ENCODE measurements at regions of chr9 and their contacts with region 1.

Region 1: GRCh38 chr9:131046581-131047202 is 37.7 kb downstream of the LAMC3 start:
- DNase-seq: peak; percentile 83
- ATAC-seq: peak; percentile 84
- H3K4me3 ChIP-seq: no peak overlapping the region
- H3K4me3 Mint-ChIP-seq: peak overlapping the region; percentile 26
- H3K27ac ChIP-seq: no peak overlapping the region
- H3K27ac Mint-ChIP-seq: no peak overlapping the region
- H3K4me1 ChIP-seq: peaks cover 17 to 34% of the 10 kb centered on the region in 2 donors
- H3K4me1 Mint-ChIP-seq: peaks cover 16% of the 10 kb centered on the region
- H3K27me3 ChIP-seq: peaks cover 0 to 5% (median 0%) of the 10 kb centered on the region in 4 experiments
- H3K27me3 Mint-ChIP-seq: peaks cover 7% of the 10 kb centered on the region
- CTCF ChIP-seq: peak; percentile 99

Region 2: GRCh38 chr9:130701056-130702022 is 345.4 kb before region 1 on chr9:
- CTCF ChIA-PET with region 1: interaction called, 30 read pairs
- POLR2A ChIA-PET with region 1: no interaction called
- intact Hi-C with region 1: no loop called
- DNase-seq: peak; percentile 73
- ATAC-seq: peak; percentile 67
- H3K4me3 ChIP-seq: no peak overlapping the region
- H3K4me3 Mint-ChIP-seq: no peak overlapping the region
- H3K27ac ChIP-seq: no peak overlapping the region
- H3K27ac Mint-ChIP-seq: no peak overlapping the region
- H3K4me1 ChIP-seq: no peaks in the 10 kb centered on the region
- H3K4me1 Mint-ChIP-seq: peaks cover 15% of the 10 kb centered on the region
- H3K27me3 ChIP-seq: no peaks in the 10 kb centered on the region
- H3K27me3 Mint-ChIP-seq: no peaks in the 10 kb centered on the region
- CTCF ChIP-seq: peak; percentile 96

Region 3: DNA sequence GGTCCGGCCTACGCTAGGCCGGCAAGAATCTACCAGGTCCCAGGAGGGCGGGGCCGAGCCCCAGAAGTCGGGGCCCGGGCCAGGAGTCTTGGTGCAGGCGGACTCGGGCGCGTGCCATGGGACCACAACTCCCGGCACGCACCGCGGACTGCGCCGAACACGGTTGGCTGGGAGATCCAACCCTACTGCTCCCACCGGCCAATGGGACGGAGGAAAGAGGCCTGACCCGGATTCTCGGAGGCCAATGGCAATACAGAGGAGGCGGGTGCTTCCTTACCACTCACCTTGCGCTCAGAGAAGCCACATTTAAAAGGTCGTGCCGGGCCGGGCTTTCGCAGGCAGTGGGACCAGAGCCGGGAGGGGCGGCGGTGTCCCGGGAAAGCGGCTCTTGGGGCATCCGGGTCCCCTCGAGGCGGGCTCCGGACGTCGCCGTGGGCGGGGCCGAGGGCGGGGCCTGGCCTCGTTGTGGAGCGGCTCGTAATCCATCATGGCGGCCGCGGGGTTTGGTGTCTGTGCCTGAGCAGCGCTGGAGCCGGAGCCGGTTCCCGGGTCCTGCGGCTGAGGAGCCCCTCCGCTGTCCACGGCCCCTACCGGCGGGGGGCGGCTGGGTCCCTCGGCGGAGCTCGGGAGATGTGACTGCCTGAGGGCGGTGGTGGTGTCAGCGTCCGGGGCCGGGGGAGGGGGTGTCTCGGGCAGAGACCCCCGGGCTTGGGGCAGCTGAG is 334.0 kb before region 1 on chr9:
- CTCF ChIA-PET with region 1: interaction called, 30 read pairs
- POLR2A ChIA-PET with region 1: no interaction called
- intact Hi-C with region 1: loop called (anchors 1 kb)
- DNase-seq: peak; percentile 97
- ATAC-seq: peak; percentile 97
- H3K4me3 ChIP-seq: peak overlapping the region; percentile 53 to 94 (median 88)
- H3K4me3 Mint-ChIP-seq: peak overlapping the region; percentile 92
- H3K27ac ChIP-seq: peak overlapping the region; percentile 92 to 98
- H3K27ac Mint-ChIP-seq: peak overlapping the region; percentile 95
- H3K4me1 ChIP-seq: peaks cover 24 to 33% of the 10 kb centered on the region in 2 donors
- H3K4me1 Mint-ChIP-seq: peaks cover 33% of the 10 kb centered on the region
- H3K27me3 ChIP-seq: no peaks in the 10 kb centered on the region
- H3K27me3 Mint-ChIP-seq: no peaks in the 10 kb centered on the region
- CTCF ChIP-seq: no peak

Region 4: GRCh38 chr9:130780865-130781504 is 265.7 kb before region 1 on chr9:
- CTCF ChIA-PET with region 1: no interaction called
- POLR2A ChIA-PET with region 1: no interaction called
- intact Hi-C with region 1: no loop called
- DNase-seq: no peak
- ATAC-seq: no peak
- H3K4me3 ChIP-seq: no peak overlapping the region
- H3K4me3 Mint-ChIP-seq: no peak overlapping the region
- H3K27ac ChIP-seq: no peak overlapping the region
- H3K27ac Mint-ChIP-seq: no peak overlapping the region
- H3K4me1 ChIP-seq: no peaks in the 10 kb centered on the region
- H3K4me1 Mint-ChIP-seq: peaks cover 6% of the 10 kb centered on the region
- H3K27me3 ChIP-seq: no peaks in the 10 kb centered on the region
- H3K27me3 Mint-ChIP-seq: no peaks in the 10 kb centered on the region
- CTCF ChIP-seq: no peak

Region 5: GRCh38 chr9:130866474-130866965 is 180.2 kb before region 1 on chr9:
- CTCF ChIA-PET with region 1: interaction called, 142 read pairs
- POLR2A ChIA-PET with region 1: interaction called, 5 read pairs
- intact Hi-C with region 1: no loop called
- DNase-seq: peak; percentile 67
- ATAC-seq: peak; percentile 47
- H3K4me3 ChIP-seq: no peak overlapping the region
- H3K4me3 Mint-ChIP-seq: no peak overlapping the region
- H3K27ac ChIP-seq: no peak overlapping the region
- H3K27ac Mint-ChIP-seq: no peak overlapping the region
- H3K4me1 ChIP-seq: peaks cover 7 to 12% of the 10 kb centered on the region in 2 donors
- H3K4me1 Mint-ChIP-seq: peaks cover 15% of the 10 kb centered on the region
- H3K27me3 ChIP-seq: no peaks in the 10 kb centered on the region
- H3K27me3 Mint-ChIP-seq: no peaks in the 10 kb centered on the region
- CTCF ChIP-seq: peak; percentile 79

Region 6: DNA sequence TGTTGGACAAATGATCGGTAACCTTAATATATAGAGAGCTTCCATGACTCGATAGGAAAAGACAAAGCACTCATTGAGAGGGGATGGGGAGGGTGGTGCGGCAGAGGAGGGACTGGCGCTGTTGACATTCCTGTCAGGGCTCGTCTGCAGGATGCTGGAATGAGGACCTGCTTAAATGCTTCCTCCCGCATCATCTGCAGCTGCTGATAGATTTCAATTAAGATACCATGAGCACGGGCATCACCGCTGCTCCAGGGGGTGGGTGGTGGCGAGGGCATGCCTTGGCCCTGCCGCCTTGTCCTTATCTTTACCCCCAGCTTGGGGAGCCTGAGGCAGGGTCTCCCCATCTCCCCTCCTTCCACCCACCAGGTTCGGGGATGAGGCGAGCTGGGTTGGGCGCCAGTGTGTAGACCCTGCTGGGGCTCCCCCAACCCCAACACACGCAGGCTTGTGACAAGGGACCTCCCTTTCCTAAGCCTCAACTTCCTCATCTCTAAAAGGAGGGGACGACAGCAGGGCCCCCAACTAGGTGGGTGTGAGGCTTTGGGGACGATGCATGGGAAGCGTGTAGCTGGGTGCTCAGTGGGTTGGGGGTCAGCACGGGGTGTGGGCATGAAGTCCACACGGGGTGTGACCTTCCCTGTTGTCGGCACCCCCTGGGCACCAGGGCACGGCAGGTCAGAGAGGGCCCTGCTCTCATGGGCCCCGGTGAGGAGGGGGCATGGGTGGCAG is 138.4 kb before region 1 on chr9:
- CTCF ChIA-PET with region 1: no interaction called
- POLR2A ChIA-PET with region 1: no interaction called
- intact Hi-C with region 1: no loop called
- DNase-seq: no peak
- ATAC-seq: no peak
- H3K4me3 ChIP-seq: no peak overlapping the region
- H3K4me3 Mint-ChIP-seq: no peak overlapping the region
- H3K27ac ChIP-seq: no peak overlapping the region
- H3K27ac Mint-ChIP-seq: no peak overlapping the region
- H3K4me1 ChIP-seq: no peaks in the 10 kb centered on the region
- H3K4me1 Mint-ChIP-seq: no peaks in the 10 kb centered on the region
- H3K27me3 ChIP-seq: no peaks in the 10 kb centered on the region
- H3K27me3 Mint-ChIP-seq: peaks cover 5% of the 10 kb centered on the region
- CTCF ChIP-seq: no peak

Region 7: GRCh38 chr9:130940693-130941576 is 105.8 kb before region 1 on chr9:
- CTCF ChIA-PET with region 1: interaction called, 8 read pairs
- POLR2A ChIA-PET with region 1: no interaction called
- intact Hi-C with region 1: loop called (anchors 1 kb)
- DNase-seq: peak; percentile 76
- ATAC-seq: peak; percentile 84
- H3K4me3 ChIP-seq: peak overlapping the region in 1 of 5 experiments; percentile 19
- H3K4me3 Mint-ChIP-seq: peak overlapping the region; percentile 47
- H3K27ac ChIP-seq: no peak overlapping the region
- H3K27ac Mint-ChIP-seq: no peak overlapping the region
- H3K4me1 ChIP-seq: peaks cover 19 to 32% of the 10 kb centered on the region in 2 donors
- H3K4me1 Mint-ChIP-seq: peaks cover 21% of the 10 kb centered on the region
- H3K27me3 ChIP-seq: peaks cover 0 to 53% (median 27%) of the 10 kb centered on the region in 4 experiments
- H3K27me3 Mint-ChIP-seq: peaks cover 55% of the 10 kb centered on the region
- CTCF ChIP-seq: peak; percentile 89

Region 8: GRCh38 chr9:131031005-131031641 is 15.6 kb before region 1 on chr9:
- CTCF ChIA-PET with region 1: interaction called, 10 read pairs
- POLR2A ChIA-PET with region 1: no interaction called
- intact Hi-C with region 1: no loop called
- DNase-seq: no peak
- ATAC-seq: no peak
- H3K4me3 ChIP-seq: no peak overlapping the region
- H3K4me3 Mint-ChIP-seq: no peak overlapping the region
- H3K27ac ChIP-seq: no peak overlapping the region
- H3K27ac Mint-ChIP-seq: no peak overlapping the region
- H3K4me1 ChIP-seq: no peaks in the 10 kb centered on the region
- H3K4me1 Mint-ChIP-seq: no peaks in the 10 kb centered on the region
- H3K27me3 ChIP-seq: peaks cover 0 to 2% (median 0%) of the 10 kb centered on the region in 4 experiments
- H3K27me3 Mint-ChIP-seq: peaks cover 6% of the 10 kb centered on the region
- CTCF ChIP-seq: no peak